CD4-positive, alpha-beta T cell (primary cell): ENCODE measurements at regions of chr3 and their contacts with region 1.

Region 1: DNA sequence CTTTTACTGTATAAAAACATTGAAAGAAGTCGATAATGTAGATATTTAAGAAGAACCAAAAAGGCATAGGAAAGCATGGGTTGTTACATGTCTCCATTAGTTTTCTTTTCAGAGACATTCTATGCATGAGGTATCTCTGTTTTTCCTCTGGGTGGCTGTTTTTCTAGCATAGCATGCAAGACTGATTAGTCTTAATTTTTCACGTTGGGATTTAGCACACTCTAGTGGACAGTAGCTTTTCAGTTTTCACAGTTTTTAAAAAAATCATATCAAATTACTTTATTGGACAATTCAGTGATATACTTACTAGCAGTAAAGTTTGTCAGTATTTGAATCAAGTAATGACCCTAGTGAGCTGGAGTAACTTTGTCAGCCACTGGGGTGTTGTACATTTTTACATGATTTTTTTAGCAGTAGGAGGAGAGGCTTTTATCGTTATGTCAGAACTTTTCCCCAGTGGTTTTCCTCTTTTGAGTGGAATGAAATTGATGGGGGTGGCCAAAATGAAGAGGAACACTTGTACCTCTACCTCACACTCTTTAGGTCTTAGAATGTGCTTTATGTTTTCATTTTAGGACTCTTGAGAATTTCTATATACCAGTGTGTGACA is 57.2 kb downstream of the SEC22A start:
- DNase-seq: peak in 3 of 14 experiments; percentile 37 to 48 (median 45)
- ATAC-seq: peak; percentile 77
- H3K4me3 ChIP-seq: no peak overlapping the region
- H3K4me3 Mint-ChIP-seq: no peak overlapping the region
- H3K27ac ChIP-seq: no peak overlapping the region
- H3K27ac Mint-ChIP-seq: no peak overlapping the region
- H3K4me1 ChIP-seq: no peaks in the 10 kb centered on the region
- H3K4me1 Mint-ChIP-seq: no peaks in the 10 kb centered on the region
- H3K27me3 ChIP-seq: no peaks in the 10 kb centered on the region
- H3K27me3 Mint-ChIP-seq: no peaks in the 10 kb centered on the region
- CTCF ChIP-seq: peak; percentile 44

Region 2: GRCh38 chr3:122942937-122943827 is 315.7 kb before region 1 on chr3:
- CTCF ChIA-PET with region 1: no interaction called
- POLR2A ChIA-PET with region 1: no interaction called
- intact Hi-C with region 1: loop called in 1 of 2 experiments (anchors 5 kb)
- DNase-seq: peak in 3 of 14 experiments; percentile 7 to 38 (median 21)
- ATAC-seq: no peak
- H3K4me3 ChIP-seq: no peak overlapping the region
- H3K4me3 Mint-ChIP-seq: no peak overlapping the region
- H3K27ac ChIP-seq: no peak overlapping the region
- H3K27ac Mint-ChIP-seq: no peak overlapping the region
- H3K4me1 ChIP-seq: peaks cover 18% of the 10 kb centered on the region
- H3K4me1 Mint-ChIP-seq: peaks cover 4% of the 10 kb centered on the region
- H3K27me3 ChIP-seq: peaks cover 0 to 2% of the 10 kb centered on the region in 2 experiments
- H3K27me3 Mint-ChIP-seq: peaks cover 5% of the 10 kb centered on the region
- CTCF ChIP-seq: peak; percentile 56

Region 3: GRCh38 chr3:123036352-123037014 is 222.4 kb before region 1 on chr3:
- CTCF ChIA-PET with region 1: no interaction called
- POLR2A ChIA-PET with region 1: no interaction called
- intact Hi-C with region 1: loop called in 1 of 2 experiments (anchors 10 kb)
- DNase-seq: no peak
- ATAC-seq: no peak
- H3K4me3 ChIP-seq: no peak overlapping the region
- H3K4me3 Mint-ChIP-seq: no peak overlapping the region
- H3K27ac ChIP-seq: no peak overlapping the region
- H3K27ac Mint-ChIP-seq: no peak overlapping the region
- H3K4me1 ChIP-seq: no peaks in the 10 kb centered on the region
- H3K4me1 Mint-ChIP-seq: no peaks in the 10 kb centered on the region
- H3K27me3 ChIP-seq: peaks cover 12 to 28% of the 10 kb centered on the region in 2 experiments
- H3K27me3 Mint-ChIP-seq: peaks cover 65% of the 10 kb centered on the region
- CTCF ChIP-seq: no peak